Panc1 (cell line): ENCODE measurements at regions of chr21 and their contacts with region 1.

Region 1: GRCh38 chr21:31580866-31581276 is 78.6 kb upstream of the SOD1 start:
- DNase-seq: peak; percentile 50
- ATAC-seq: peak; percentile 85
- H3K4me3 ChIP-seq: no peak overlapping the region
- H3K27ac ChIP-seq: no peak overlapping the region
- H3K4me1 ChIP-seq: no peaks in the 10 kb centered on the region
- H3K27me3 ChIP-seq: no peaks in the 10 kb centered on the region
- CTCF ChIP-seq: peak; percentile 80

Region 2: GRCh38 chr21:31347435-31348032 is 233.3 kb before region 1 on chr21:
- CTCF ChIA-PET with region 1: interaction called, 6 read pairs
- POLR2A ChIA-PET with region 1: no interaction called
- in situ Hi-C with region 1: no loop called
- intact Hi-C with region 1: loop called (anchors 2 kb)
- DNase-seq: no peak
- ATAC-seq: peak; percentile 64; the same call in 1 of the 2 replicates
- H3K4me3 ChIP-seq: peak overlapping the region in 1 of 2 experiments; percentile 40; a peak in 2 of 4 replicates
- H3K27ac ChIP-seq: no peak overlapping the region
- H3K4me1 ChIP-seq: no peaks in the 10 kb centered on the region
- H3K27me3 ChIP-seq: peaks cover 4% of the 10 kb centered on the region; the same call in 1 of the 2 replicates
- CTCF ChIP-seq: peak; percentile 77

Region 3: DNA sequence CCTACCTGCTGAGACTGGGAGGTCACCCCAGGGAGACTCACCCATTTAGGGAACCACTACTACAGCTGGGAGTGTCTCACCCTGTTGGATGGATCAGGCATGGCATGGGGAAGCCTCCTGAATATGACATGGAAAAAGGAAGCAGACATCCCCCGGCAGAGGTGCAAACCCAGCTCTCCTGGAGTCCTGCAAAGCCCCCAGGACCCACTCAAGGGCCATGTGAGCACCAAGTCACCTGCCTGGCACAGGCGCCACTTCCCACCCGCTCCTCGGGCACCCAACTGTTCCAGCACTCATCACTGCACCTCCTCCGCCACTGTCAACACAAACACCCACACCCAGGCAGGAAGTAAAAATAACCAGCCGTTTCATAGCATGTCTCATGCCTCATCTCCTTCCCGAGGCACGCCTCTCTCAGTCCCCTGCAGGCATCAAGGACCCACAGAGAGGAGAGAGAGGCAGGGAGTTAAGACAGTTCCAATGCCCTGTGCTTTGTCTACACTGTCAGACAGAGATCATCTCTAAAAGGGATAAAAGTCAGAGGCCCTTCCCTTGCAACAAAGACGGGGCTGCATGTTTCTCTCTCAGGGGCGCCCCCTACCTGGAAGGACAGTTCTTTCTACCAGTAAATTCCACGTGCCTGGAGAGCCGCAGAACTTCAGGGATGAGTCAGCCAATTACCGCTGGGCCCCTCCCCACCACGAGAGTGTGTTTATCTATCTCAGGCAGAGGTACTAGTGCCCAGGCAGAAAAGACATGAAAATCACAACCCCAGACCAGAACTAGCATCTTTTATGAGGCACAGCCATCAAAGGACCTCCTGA is 71.5 kb before region 1 on chr21:
- CTCF ChIA-PET with region 1: no interaction called
- POLR2A ChIA-PET with region 1: no interaction called
- in situ Hi-C with region 1: no loop called
- intact Hi-C with region 1: no loop called
- DNase-seq: no peak
- ATAC-seq: no peak; the same call in 1 of the 2 replicates
- H3K4me3 ChIP-seq: no peak overlapping the region
- H3K27ac ChIP-seq: no peak overlapping the region
- H3K4me1 ChIP-seq: no peaks in the 10 kb centered on the region
- H3K27me3 ChIP-seq: no peaks in the 10 kb centered on the region
- CTCF ChIP-seq: peak; percentile 47